ENCODE measurements at regions of chr16 and their contacts with region 1.

Region 1: DNA sequence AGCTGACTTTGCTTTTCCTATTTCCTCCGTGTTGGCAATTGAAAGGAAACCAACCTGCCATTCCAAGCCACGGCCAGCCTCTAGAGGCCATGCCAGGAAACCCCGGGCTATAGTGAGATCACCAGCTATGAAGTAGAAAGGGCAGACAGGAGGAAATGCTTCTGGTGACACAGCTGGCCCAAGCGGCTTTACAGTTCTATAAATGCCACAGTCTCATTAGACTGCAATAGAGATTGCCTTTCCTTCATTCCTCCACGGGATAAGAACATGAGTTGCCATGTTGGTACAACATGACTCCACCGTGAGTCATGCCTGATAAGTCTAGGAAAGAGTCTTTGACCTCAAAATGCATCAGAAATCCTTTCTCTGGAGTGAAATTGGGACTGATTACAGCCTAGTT is 384.9 kb downstream of the GRIN2A start:
- DNase-seq: no peak
- ATAC-seq: peak; percentile 72

Region 2: GRCh38 chr16:9489835-9490467 is 307.4 kb before region 1 on chr16:
- intact Hi-C with region 1: loop called (anchors 10 kb)
- DNase-seq: peak; percentile 74
- ATAC-seq: peak; percentile 91

Region 3: DNA sequence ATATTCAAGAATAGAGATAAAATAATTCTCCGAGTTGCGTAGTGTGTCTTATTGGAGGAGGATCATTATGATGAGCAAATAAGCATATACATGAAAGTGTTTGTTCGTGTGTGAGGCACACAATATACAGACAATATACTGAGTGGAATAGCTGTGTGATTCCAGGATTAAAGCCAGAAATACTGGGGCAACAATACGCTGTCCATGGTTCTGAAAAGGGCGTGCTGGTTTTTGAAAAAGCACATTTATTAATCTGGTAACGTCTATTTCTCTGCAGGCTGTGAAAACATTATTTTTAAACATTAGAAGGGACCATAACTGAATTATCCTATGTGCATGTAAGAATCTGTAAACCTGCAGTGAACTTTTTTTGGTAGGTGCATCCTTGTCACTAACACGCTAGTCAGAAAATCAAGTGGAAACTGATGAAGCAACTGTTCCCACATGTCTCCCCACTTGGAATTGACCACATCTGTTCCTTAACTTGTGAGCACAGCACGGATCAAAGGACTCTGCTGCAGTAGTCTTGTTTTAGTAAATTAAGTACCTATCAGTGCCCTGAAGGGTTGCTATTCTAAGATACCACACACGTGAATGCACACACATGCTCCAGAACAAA is 38.9 kb after region 1 on chr16:
- intact Hi-C with region 1: no loop called
- DNase-seq: no peak
- ATAC-seq: no peak

Measured in Right ventricle myocardium inferior (tissue), 1 donor.